MCF 10A (cell line): ENCODE measurements at regions of chr19 and their contacts with region 1.

Region 1: GRCh38 chr19:11324079-11324661 is 15.3 kb downstream of the RAB3D start:
- DNase-seq: peak; percentile 99
- H3K4me3 Mint-ChIP-seq: peak overlapping the region; percentile 53
- H3K27ac Mint-ChIP-seq: peak overlapping the region; percentile 49
- H3K4me1 Mint-ChIP-seq: peaks cover 16% of the 10 kb centered on the region
- H3K27me3 Mint-ChIP-seq: no peaks in the 10 kb centered on the region
- CTCF ChIP-seq: no peak

Region 2: GRCh38 chr19:11204943-11205349 is 119.2 kb before region 1 on chr19:
- CTCF ChIA-PET with region 1: no interaction called
- POLR2A ChIA-PET with region 1: no interaction called
- intact Hi-C with region 1: no loop called
- DNase-seq: peak; percentile 97
- H3K4me3 Mint-ChIP-seq: peak overlapping the region; percentile 35
- H3K27ac Mint-ChIP-seq: peak overlapping the region; percentile 83
- H3K4me1 Mint-ChIP-seq: peaks cover 25% of the 10 kb centered on the region
- H3K27me3 Mint-ChIP-seq: no peaks in the 10 kb centered on the region
- CTCF ChIP-seq: no peak

Region 3: DNA sequence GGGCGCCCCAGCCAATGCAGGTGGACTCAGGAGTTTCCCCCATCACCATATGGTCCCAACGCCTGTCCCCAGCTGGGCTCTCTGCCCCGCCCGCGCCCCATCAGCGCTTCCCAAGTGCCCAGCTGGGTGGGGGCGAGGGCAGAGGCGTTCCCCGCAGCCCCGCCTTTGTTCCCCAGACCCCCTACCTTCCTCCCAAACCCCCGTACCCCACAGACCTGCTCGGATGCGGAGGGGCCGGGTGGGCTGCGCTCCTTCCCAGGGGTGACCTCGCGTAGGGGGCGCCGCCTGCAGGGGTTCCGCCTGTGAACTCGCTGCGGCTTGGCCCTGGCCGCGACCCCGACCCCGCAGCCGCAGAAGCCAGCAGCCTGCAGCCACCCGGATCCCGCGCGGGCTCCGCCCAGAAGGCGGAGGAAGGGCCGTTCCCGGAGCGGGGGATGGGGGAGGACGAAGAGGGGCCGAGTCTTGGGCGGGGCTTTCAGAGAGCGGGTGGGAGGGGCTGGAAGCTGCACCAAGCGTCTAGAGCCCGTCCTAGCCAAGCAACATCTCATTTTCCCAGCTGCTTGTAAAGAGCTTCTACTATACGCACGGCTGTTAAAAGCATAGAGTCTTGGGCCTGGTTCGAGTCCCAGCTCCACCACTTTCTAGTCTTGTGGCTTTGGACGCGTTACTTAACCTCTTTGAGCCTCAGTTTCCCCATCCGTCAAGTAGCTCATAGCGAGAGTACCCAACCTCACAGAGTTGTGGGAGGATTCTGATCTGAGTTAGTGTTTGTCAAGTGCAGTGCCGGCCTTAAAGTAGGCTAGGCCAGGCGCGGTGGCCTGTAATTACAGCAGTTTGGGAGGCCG is 15.3 kb after region 1 on chr19 and contains the start of gene RAB3D:
- CTCF ChIA-PET with region 1: interaction called, 3 read pairs
- POLR2A ChIA-PET with region 1: interaction called, 33 read pairs
- intact Hi-C with region 1: no loop called
- DNase-seq: peak; percentile 93
- H3K4me3 Mint-ChIP-seq: peak within 1 kb of the TSS; percentile 74
- H3K27ac Mint-ChIP-seq: peak within 1 kb of the TSS; percentile 59
- H3K4me1 Mint-ChIP-seq: peaks cover 16% of the 10 kb centered on the region
- H3K27me3 Mint-ChIP-seq: no peaks in the 10 kb centered on the region
- CTCF ChIP-seq: no peak
- total RNA-seq, gene RAB3D: 42.8 and 46.5 TPM in 2 replicates

Region 4: DNA sequence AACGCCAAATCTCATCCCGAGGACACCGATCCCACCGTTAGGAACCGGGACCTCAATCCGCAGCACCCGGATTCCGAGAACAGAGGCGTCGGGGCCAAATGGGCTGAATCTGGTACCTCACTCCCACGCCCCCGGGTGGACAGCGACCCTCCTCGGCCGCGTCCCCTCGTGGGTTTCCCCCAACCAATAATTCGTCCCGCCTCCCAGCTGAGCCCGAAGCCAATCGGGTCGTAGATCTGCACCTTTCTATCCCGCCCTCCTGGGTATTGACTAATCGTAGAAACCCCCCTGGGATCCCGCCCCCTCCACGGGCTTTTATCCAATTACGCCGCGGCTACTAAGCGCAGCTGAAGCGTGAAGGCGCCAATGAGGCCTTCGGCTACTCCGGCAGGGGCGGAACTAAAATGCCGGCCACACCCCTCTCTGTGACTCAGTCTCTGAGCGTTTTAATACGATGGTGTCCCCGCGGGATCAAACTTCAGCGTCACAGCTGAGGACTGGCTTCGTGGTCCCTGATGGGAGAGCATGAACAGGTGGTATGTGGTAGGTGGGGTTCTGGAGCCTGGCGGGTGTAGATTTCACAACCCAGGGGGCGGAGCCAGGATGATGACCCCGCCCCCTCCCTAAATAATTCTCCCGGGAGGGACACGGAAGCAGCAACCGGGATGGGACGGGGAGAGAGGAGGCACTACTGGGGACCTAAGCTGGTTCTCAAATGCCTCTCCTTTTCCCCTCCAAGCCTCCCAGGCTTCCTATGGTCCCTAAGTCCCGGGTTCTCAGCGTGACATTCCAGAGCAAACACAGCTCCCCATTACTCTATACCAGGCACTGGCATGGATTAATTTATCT is 22.1 kb after region 1 on chr19 and contains the starts of genes CCDC159 and TMEM205:
- CTCF ChIA-PET with region 1: interaction called, 5 read pairs
- POLR2A ChIA-PET with region 1: interaction called, 33 read pairs
- intact Hi-C with region 1: no loop called
- DNase-seq: peak; percentile 100
- H3K4me3 Mint-ChIP-seq: peak within 1 kb of the TSS; percentile 96
- H3K27ac Mint-ChIP-seq: peak within 1 kb of the TSS; percentile 98
- H3K4me1 Mint-ChIP-seq: peaks cover 30% of the 10 kb centered on the region
- H3K27me3 Mint-ChIP-seq: no peaks in the 10 kb centered on the region
- CTCF ChIP-seq: no peak
- total RNA-seq, gene CCDC159: 17.2 and 18.2 TPM in 2 replicates
- total RNA-seq, gene TMEM205: 93.1 and 96.6 TPM in 2 replicates

Region 5: DNA sequence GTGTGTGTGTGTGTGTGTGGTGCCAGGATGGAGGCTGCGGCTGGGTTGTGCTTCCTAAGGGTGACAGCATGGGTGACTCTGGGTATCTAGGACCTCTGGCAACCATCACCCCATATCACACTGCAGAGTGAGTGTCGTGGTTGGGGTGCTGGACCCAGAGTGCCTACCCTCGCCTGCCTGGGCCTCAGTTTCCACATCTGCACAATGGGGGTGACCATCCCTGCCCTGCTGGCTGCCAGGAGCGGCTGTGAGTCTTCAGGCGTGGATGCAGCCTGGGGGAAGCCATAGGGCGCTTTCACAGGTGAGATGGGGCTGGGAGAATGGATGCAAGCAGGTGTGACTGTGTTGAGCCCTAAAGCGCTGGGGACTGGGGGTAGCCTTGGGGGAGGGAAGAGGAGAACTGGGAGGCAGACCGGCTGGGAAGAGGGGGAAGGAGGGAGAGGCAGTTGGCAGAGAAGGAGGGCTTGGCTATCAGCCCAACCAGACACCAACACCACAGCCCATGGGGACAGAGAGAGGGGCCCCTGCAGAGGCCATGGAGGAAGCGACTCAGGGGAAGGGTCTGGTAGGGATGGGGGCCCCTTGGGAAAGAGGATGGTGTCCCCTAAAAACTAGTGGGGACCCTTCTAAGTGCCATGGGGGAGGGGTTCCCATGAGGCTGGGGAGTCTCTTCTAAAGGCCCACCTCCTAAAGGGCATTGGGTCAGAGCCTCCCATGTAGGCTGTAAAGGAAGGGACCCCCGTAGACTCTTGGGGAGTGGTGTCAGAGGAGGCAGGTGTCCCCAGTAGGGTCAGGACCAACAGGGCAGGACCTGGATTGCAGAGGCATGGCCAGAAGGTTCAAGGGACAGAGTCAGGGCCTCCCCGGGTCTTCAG is 32.7 kb after region 1 on chr19:
- CTCF ChIA-PET with region 1: no interaction called
- POLR2A ChIA-PET with region 1: no interaction called
- intact Hi-C with region 1: no loop called
- DNase-seq: no peak
- H3K4me3 Mint-ChIP-seq: peak overlapping the region; percentile 83
- H3K27ac Mint-ChIP-seq: peak overlapping the region; percentile 52
- H3K4me1 Mint-ChIP-seq: peaks cover 26% of the 10 kb centered on the region
- H3K27me3 Mint-ChIP-seq: no peaks in the 10 kb centered on the region
- CTCF ChIP-seq: no peak